PC-9 (cell line): ENCODE measurements at regions of chrX and their contacts with region 1.

Region 1: GRCh38 chrX:18390941-18391538 is 34.4 kb upstream of the CDKL5 start:
- DNase-seq: peak; percentile 35 to 38
- H3K4me3 ChIP-seq: no peak overlapping the region
- H3K27ac ChIP-seq: no peak overlapping the region
- H3K4me1 ChIP-seq: no peaks in the 10 kb centered on the region
- H3K27me3 ChIP-seq: no peaks in the 10 kb centered on the region
- CTCF ChIP-seq: peak; percentile 85

Region 2: DNA sequence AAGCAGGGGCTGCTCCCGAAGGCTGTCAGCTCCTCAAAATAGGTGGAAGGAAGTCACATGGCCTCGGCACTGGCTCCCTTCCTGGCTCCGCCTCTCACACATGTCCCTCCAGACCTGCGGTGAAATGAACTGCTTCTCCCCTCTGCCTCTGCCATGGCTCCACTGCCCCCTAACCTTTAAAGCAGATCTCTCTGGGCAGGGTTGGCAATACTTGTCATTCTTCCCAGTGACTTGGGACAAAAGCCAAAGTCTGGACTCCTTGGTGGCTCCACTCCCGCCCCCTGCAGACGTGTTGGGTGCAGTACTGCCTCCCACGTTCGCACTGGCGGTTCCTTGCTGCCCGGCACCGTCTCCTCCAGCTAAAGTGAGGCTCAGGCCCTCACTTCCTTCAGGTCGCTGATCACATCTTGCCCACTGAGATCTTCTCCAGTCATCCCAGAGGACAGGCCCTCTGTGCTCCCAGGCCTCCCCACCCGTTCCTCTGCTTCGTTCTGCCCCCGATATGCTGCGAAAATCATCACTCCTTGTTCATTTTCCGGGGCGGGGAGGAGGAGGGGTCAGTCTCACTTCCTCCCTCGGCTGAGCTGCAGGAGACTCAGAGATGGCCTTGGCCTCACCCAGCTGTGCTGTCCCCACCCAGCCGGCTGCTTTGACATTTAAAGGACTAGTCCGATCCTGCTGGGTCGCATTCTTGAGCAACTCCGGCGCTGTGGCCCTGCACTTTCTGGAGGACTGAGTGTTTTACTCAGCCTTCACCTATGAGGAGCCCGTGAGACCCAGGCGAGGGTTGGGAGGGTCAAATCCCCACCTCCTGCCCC is 495.5 kb after region 1 on chrX:
- CTCF ChIA-PET with region 1: no interaction called
- POLR2A ChIA-PET with region 1: no interaction called
- intact Hi-C with region 1: loop called (anchors 5 kb)
- DNase-seq: peak; percentile 76 to 80
- H3K4me3 ChIP-seq: peak overlapping the region; percentile 51
- H3K27ac ChIP-seq: no peak overlapping the region
- H3K4me1 ChIP-seq: peaks cover 8% of the 10 kb centered on the region; the same call in 1 of the 2 replicates
- H3K27me3 ChIP-seq: no peaks in the 10 kb centered on the region
- CTCF ChIP-seq: peak; percentile 68

Region 3: DNA sequence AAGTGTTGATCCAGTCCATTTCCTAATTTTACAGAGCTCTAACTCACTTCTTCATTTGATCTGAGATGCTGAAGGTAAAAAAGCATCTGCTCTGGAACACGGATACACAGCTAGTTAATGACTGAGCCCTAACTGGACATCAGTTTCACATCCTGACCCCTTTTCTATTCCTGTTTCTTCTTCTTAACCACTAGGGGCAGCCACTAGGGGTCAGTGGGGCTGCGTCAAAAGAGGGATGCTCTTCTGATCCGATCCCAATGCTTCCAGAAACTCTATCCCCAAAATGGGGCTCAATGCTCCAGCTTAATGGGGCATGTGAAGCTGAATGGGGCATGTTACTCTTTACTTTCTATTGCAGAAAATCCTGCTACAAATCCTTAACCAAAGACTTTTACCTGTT is 626.2 kb after region 1 on chrX:
- CTCF ChIA-PET with region 1: no interaction called
- POLR2A ChIA-PET with region 1: no interaction called
- intact Hi-C with region 1: loop called (anchors 10 kb)
- DNase-seq: peak in 1 of 2 experiments; percentile 6
- H3K4me3 ChIP-seq: no peak overlapping the region
- H3K27ac ChIP-seq: no peak overlapping the region
- H3K4me1 ChIP-seq: no peaks in the 10 kb centered on the region
- H3K27me3 ChIP-seq: no peaks in the 10 kb centered on the region
- CTCF ChIP-seq: peak; percentile 64

Region 4: GRCh38 chrX:19334945-19335626 is 944.0 kb after region 1 on chrX:
- CTCF ChIA-PET with region 1: interaction called, 5 read pairs
- POLR2A ChIA-PET with region 1: no interaction called
- intact Hi-C with region 1: loop called (anchors 1 kb)
- DNase-seq: no peak
- H3K4me3 ChIP-seq: no peak overlapping the region
- H3K27ac ChIP-seq: no peak overlapping the region
- H3K4me1 ChIP-seq: no peaks in the 10 kb centered on the region
- H3K27me3 ChIP-seq: peaks cover 26% of the 10 kb centered on the region
- CTCF ChIP-seq: peak; percentile 54